H1 (cell line): ENCODE measurements at regions of chrX and their contacts with region 1.

Region 1: DNA sequence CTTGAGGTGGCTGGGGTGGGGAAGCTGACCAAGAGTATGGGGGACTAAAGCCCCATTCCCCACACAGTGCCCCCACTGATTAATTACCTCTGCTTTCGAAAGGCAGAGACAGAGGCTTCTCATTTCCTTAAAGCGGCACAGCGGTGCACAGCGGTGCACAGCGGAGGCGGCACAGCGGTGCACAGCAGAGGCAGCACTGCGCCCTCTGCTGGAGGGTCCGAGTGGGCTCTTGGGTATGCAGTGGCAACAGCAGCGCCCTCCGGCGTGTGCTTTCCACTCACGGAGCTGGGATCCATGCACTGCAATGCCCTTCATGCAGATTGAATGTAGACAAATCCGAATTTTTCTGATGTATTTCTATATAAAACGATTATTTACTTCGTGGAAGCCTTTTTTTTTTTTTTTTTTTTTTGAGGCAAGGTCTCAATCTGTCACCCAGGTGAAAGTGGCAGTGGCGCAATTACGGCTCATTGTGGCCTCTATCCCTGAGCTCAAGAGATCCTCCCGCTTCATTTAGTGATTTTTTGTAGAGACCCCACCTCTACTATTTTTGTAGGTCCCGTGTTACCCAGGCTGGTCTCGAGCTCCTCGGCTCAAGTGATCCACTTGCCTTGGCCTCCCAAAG is 19.7 kb upstream of the PRPS2 start:
- DNase-seq: peak in 1 of 2 experiments; percentile 66
- H3K4me3 ChIP-seq: peak overlapping the region in 1 of 4 experiments; percentile 10; a peak in 1 of 8 replicates
- H3K27ac ChIP-seq: no peak overlapping the region
- H3K4me1 ChIP-seq: no peaks in the 10 kb centered on the region
- H3K27me3 ChIP-seq: no peaks in the 10 kb centered on the region
- CTCF ChIP-seq: peak; percentile 87 to 99 (median 91)
- EP300 ChIP-seq: no peak
- POLR2A ChIP-seq: no peak
- RAD21 ChIP-seq: peak; percentile 48 to 71; a peak in 3 of 4 replicates

Region 2: GRCh38 chrX:12701628-12702027 is 69.9 kb before region 1 on chrX:
- CTCF ChIA-PET with region 1: interaction called, 19 read pairs
- POLR2A ChIA-PET with region 1: no interaction called
- DNase-seq: peak; percentile 9 to 55
- H3K4me3 ChIP-seq: no peak overlapping the region
- H3K27ac ChIP-seq: no peak overlapping the region
- H3K4me1 ChIP-seq: no peaks in the 10 kb centered on the region
- H3K27me3 ChIP-seq: no peaks in the 10 kb centered on the region
- CTCF ChIP-seq: peak; percentile 45 to 65 (median 56)
- EP300 ChIP-seq: no peak
- POLR2A ChIP-seq: no peak
- RAD21 ChIP-seq: peak; percentile 74 to 84

Region 3: GRCh38 chrX:12741439-12741838 is 30.1 kb before region 1 on chrX:
- CTCF ChIA-PET with region 1: interaction called, 12 read pairs
- POLR2A ChIA-PET with region 1: no interaction called
- DNase-seq: no peak
- H3K4me3 ChIP-seq: no peak overlapping the region
- H3K27ac ChIP-seq: no peak overlapping the region
- H3K4me1 ChIP-seq: no peaks in the 10 kb centered on the region
- H3K27me3 ChIP-seq: no peaks in the 10 kb centered on the region
- CTCF ChIP-seq: no peak
- EP300 ChIP-seq: no peak
- POLR2A ChIP-seq: no peak
- RAD21 ChIP-seq: no peak

Region 4: GRCh38 chrX:12751887-12752286 is 19.7 kb before region 1 on chrX:
- CTCF ChIA-PET with region 1: interaction called, 21 read pairs
- POLR2A ChIA-PET with region 1: no interaction called
- DNase-seq: no peak
- H3K4me3 ChIP-seq: no peak overlapping the region
- H3K27ac ChIP-seq: no peak overlapping the region
- H3K4me1 ChIP-seq: no peaks in the 10 kb centered on the region
- H3K27me3 ChIP-seq: no peaks in the 10 kb centered on the region
- CTCF ChIP-seq: no peak
- EP300 ChIP-seq: no peak
- POLR2A ChIP-seq: no peak
- RAD21 ChIP-seq: no peak

Region 5: GRCh38 chrX:12758292-12758691 is 13.3 kb before region 1 on chrX:
- CTCF ChIA-PET with region 1: interaction called, 43 read pairs
- POLR2A ChIA-PET with region 1: no interaction called
- DNase-seq: no peak
- H3K4me3 ChIP-seq: no peak overlapping the region
- H3K27ac ChIP-seq: no peak overlapping the region
- H3K4me1 ChIP-seq: no peaks in the 10 kb centered on the region
- H3K27me3 ChIP-seq: no peaks in the 10 kb centered on the region
- CTCF ChIP-seq: no peak
- EP300 ChIP-seq: no peak
- POLR2A ChIP-seq: no peak
- RAD21 ChIP-seq: no peak

Region 6: DNA sequence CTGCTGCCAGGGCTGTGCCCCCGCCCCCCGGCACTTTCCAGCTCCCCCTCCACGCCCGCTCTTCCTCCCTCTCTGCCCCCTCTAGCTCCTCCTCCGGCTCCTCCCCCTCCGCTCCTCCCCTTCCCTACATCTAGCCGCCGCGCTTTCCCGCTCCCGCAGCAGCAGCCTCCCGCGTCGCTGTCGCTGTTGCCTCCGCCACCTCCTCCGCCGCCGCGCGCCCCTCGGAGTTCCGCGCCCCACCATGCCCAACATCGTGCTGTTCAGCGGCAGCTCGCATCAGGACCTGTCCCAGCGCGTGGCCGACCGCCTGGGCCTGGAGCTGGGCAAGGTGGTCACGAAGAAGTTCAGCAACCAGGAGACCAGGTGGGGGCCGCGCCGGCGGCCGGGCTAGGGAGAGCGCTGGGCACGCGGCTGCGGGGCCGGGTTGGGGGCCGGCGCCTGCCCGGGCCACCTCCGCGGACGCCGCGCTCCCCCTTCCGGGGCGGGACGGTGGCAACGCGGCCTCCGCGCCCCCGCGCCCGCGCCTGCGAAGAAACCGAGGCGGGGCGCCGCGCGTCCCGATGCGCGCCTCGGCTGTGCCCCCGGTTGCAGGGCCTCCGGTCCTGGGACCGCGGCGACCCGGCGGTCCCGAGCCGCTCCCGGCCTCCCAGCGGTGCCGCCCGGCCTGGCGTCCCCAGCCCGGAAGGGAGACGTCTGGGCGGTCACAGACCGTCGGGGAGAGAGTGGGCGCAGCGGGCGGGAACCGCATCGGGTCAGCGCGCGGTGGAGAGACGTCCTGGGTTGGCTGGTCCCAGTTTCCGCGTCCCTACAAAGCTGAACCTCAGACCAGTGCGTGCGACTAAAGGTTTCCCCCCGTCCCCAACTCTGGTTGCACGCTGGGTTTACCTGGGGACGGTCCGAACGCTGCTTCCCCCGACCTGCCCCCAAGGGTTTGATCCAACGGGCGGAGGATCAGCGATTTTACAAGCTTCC is 20.0 kb after region 1 on chrX and contains the start of gene PRPS2:
- CTCF ChIA-PET with region 1: interaction called, 14 read pairs
- POLR2A ChIA-PET with region 1: no interaction called
- DNase-seq: peak in 1 of 2 experiments; percentile 76
- H3K4me3 ChIP-seq: peak within 1 kb of the TSS; percentile 56 to 77 (median 68)
- H3K27ac ChIP-seq: no peak within 1 kb of the TSS
- H3K4me1 ChIP-seq: peaks cover 0 to 4% (median 0%) of the 10 kb centered on the region in 4 experiments; a peak in 2 of 7 replicates
- H3K27me3 ChIP-seq: peaks cover 3 to 9% (median 6%) of the 10 kb centered on the region in 4 experiments
- CTCF ChIP-seq: no peak
- EP300 ChIP-seq: no peak
- POLR2A ChIP-seq: peak in 1 of 2 experiments; percentile 33; a peak in 1 of 3 replicates
- RAD21 ChIP-seq: no peak
- total RNA-seq, gene PRPS2: 29.0 and 31.4 TPM in 2 replicates